Caco-2 (cell line): ENCODE measurements at regions of chr3 and their contacts with region 1.

Region 1: DNA sequence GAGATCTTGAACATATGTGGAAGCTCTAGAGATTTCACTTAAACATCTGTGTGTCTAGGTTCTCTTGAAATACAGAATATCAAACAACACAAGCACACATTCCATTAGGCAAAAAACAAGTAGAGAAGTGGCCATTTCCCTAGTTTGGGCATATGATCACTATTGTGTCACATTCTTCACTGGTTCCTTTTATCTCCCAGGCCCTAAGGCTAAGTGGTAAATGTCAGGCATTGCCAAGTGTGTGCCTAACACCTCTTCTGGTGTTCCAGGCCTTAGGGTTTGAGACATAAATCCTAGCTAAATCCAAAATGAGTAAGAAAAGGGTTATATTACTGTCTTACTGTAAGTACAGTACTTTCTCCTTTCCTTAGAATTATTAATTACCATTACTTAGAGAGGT is 880.1 kb downstream of the PDCD6IP start:
- DNase-seq: peak in 1 of 2 experiments; percentile 45
- H3K4me3 ChIP-seq: no peak overlapping the region
- H3K4me3 Mint-ChIP-seq: no peak overlapping the region
- H3K27ac Mint-ChIP-seq: peak overlapping the region; percentile 2
- H3K4me1 ChIP-seq: peaks cover 18% of the 10 kb centered on the region
- H3K4me1 Mint-ChIP-seq: peaks cover 6% of the 10 kb centered on the region
- H3K27me3 ChIP-seq: no peaks in the 10 kb centered on the region
- H3K27me3 Mint-ChIP-seq: no peaks in the 10 kb centered on the region
- CTCF ChIP-seq: no peak

Region 2: DNA sequence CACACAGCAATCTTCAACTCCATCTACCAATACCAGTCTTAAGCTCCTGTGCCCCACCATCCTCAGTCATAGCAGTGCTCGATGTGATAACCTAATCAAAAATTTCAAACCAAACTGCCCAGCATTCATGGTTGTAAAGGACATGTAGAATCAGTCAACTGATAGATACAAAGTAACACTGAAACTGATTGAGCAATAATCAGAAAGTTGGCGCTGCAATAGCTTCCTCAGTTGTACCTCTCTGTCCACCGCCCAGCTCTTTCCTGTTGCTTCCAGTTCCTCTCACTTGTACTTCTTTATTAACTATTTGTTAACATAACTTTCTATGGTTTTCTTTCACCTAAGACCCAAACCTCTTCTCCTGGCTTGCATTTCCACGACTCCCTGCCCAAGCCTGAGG is 134.4 kb before region 1 on chr3:
- CTCF ChIA-PET with region 1: no interaction called
- POLR2A ChIA-PET with region 1: no interaction called
- intact Hi-C with region 1: no loop called
- DNase-seq: no peak
- H3K4me3 ChIP-seq: no peak overlapping the region
- H3K4me3 Mint-ChIP-seq: no peak overlapping the region
- H3K27ac Mint-ChIP-seq: no peak overlapping the region
- H3K4me1 ChIP-seq: no peaks in the 10 kb centered on the region
- H3K4me1 Mint-ChIP-seq: no peaks in the 10 kb centered on the region
- H3K27me3 ChIP-seq: no peaks in the 10 kb centered on the region
- H3K27me3 Mint-ChIP-seq: peaks cover 2% of the 10 kb centered on the region
- CTCF ChIP-seq: no peak

Region 3: GRCh38 chr3:34571306-34572093 is 107.1 kb before region 1 on chr3:
- CTCF ChIA-PET with region 1: no interaction called
- POLR2A ChIA-PET with region 1: no interaction called
- intact Hi-C with region 1: loop called (anchors 2 kb)
- DNase-seq: no peak
- H3K4me3 ChIP-seq: no peak overlapping the region
- H3K4me3 Mint-ChIP-seq: no peak overlapping the region
- H3K27ac Mint-ChIP-seq: no peak overlapping the region
- H3K4me1 ChIP-seq: peaks cover 35% of the 10 kb centered on the region
- H3K4me1 Mint-ChIP-seq: peaks cover 28% of the 10 kb centered on the region
- H3K27me3 ChIP-seq: no peaks in the 10 kb centered on the region
- H3K27me3 Mint-ChIP-seq: no peaks in the 10 kb centered on the region
- CTCF ChIP-seq: no peak